Activated B cell treated with CpG ODN at 0.5 μM for 24 hours (primary cell): ENCODE measurements at regions of chr7 and their contacts with region 1.

Region 1: DNA sequence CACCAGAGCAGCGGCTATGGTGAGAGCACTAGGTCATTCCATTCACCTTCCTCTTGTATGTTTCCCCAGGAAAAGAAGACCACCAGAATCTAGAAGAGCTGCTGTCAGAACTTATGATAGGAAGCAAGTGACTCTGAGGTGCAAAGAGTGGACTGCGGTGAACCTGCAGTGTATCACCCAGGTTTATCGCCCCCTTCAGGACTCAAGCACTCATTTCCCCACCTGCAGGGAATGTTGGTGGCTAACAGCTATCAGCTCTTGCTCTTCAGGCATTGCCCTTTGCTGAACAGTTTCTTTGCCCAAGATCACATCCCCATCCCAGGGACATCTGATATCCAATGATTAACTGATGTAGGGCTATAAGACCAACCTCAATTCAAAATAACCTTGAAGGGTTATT is 66.3 kb upstream of the IL6 start:
- DNase-seq: no peak
- ATAC-seq: no peak
- H3K4me3 Mint-ChIP-seq: peak overlapping the region; percentile 80
- H3K27ac Mint-ChIP-seq: peak overlapping the region; percentile 95
- H3K4me1 Mint-ChIP-seq: peaks cover 88% of the 10 kb centered on the region
- H3K27me3 Mint-ChIP-seq: no peaks in the 10 kb centered on the region
- CTCF ChIP-seq: no peak

Region 2: DNA sequence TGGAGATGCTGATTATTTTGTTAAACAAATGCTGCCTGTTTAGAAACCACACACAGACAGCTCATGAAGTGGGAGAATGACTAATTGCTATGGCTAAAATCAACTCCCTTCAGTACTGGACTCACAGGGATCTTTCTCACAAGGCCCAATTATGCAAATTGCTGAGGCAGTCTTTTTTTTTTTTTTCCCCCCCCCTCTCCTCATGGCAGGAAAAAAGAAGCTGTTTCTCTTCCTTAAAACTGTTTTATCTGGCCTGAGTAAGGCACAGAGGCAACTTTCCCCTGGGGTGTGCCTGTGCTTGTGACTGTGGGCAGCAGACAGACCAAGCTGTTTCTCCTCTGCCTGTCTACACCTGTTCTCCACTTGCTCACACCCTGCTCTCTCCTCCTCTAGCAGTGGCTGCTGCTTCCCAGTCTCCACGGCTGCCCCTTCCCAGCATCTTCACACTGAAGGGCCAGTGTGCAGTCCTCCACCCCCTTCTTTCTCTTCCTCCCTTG is 95.4 kb before region 1 on chr7:
- CTCF ChIA-PET with region 1: interaction called, 75 read pairs
- POLR2A ChIA-PET with region 1: interaction called, 93 read pairs
- intact Hi-C with region 1: loop called (anchors 1 kb)
- DNase-seq: no peak
- ATAC-seq: peak; percentile 65
- H3K4me3 Mint-ChIP-seq: peak overlapping the region; percentile 39
- H3K27ac Mint-ChIP-seq: peak overlapping the region; percentile 88
- H3K4me1 Mint-ChIP-seq: peaks cover 86% of the 10 kb centered on the region
- H3K27me3 Mint-ChIP-seq: no peaks in the 10 kb centered on the region
- CTCF ChIP-seq: no peak

Region 3: DNA sequence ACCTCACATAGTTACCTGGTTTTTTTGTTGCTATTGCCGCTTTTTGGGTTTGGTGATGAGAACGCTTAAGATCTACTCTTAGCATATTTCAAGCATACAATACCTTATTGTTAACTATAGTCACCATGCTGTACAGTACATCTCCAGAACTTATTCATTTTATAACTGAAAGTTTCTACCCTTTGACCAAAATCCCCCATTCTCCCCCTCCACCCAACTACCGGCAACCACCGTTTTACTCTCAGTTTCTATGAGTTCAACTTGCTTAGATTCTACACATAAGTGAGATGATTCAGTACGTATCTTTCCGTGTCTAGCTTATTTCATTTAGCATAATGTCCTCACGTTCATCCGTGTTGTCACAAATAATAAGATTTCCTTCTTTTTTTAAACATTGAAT is 20.5 kb before region 1 on chr7:
- CTCF ChIA-PET with region 1: interaction called, 4 read pairs
- POLR2A ChIA-PET with region 1: interaction called, 15 read pairs
- intact Hi-C with region 1: loop called (anchors 1 kb)
- DNase-seq: no peak
- ATAC-seq: peak; percentile 91
- H3K4me3 Mint-ChIP-seq: peak overlapping the region; percentile 55
- H3K27ac Mint-ChIP-seq: peak overlapping the region; percentile 75
- H3K4me1 Mint-ChIP-seq: peaks cover 30% of the 10 kb centered on the region
- H3K27me3 Mint-ChIP-seq: no peaks in the 10 kb centered on the region
- CTCF ChIP-seq: no peak

Region 4: GRCh38 chr7:22712999-22713398 is 52.3 kb after region 1 on chr7:
- CTCF ChIA-PET with region 1: interaction called, 9 read pairs
- POLR2A ChIA-PET with region 1: interaction called, 65 read pairs
- intact Hi-C with region 1: loop called (anchors 1 kb)
- DNase-seq: no peak
- ATAC-seq: peak; percentile 85
- H3K4me3 Mint-ChIP-seq: peak overlapping the region; percentile 66
- H3K27ac Mint-ChIP-seq: peak overlapping the region; percentile 98
- H3K4me1 Mint-ChIP-seq: peaks cover 63% of the 10 kb centered on the region
- H3K27me3 Mint-ChIP-seq: no peaks in the 10 kb centered on the region
- CTCF ChIP-seq: no peak

Region 5: DNA sequence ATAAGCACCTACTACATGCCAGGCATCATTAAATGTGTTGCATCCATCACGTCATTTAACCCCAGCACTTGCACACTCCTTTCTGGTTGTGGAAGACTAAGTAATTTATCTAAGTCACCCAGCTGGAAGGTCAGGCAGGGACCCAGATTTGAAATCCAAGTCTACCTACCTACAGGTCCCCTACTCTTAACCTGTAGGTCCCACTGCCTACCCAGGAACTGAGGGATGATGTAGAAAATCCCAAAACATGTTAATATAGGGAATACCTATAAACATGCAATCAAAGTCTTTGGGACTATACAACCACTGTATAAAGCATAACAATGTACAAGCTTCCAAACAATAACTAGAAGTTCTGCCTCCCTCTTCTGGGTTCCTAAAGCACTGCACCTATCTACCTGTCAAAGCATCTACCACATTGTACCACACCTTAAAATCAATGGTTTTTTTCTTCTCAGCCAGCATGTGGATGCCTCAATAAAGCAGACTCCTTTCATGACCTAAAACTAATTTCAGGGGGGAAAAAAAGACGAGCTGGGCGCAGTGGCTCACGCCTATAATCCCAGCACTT is 71.9 kb after region 1 on chr7:
- CTCF ChIA-PET with region 1: interaction called, 110 read pairs
- POLR2A ChIA-PET with region 1: interaction called, 215 read pairs
- intact Hi-C with region 1: no loop called
- DNase-seq: no peak
- ATAC-seq: peak; percentile 61
- H3K4me3 Mint-ChIP-seq: no peak overlapping the region
- H3K27ac Mint-ChIP-seq: no peak overlapping the region
- H3K4me1 Mint-ChIP-seq: peaks cover 40% of the 10 kb centered on the region
- H3K27me3 Mint-ChIP-seq: no peaks in the 10 kb centered on the region
- CTCF ChIP-seq: no peak

Region 6: GRCh38 chr7:23013715-23014649 is 353.2 kb after region 1 on chr7 and contains the start of gene HYCC1:
- CTCF ChIA-PET with region 1: no interaction called
- POLR2A ChIA-PET with region 1: no interaction called
- intact Hi-C with region 1: loop called (anchors 5 kb)
- DNase-seq: peak; percentile 95
- ATAC-seq: peak; percentile 96
- H3K4me3 Mint-ChIP-seq: peak within 1 kb of the TSS; percentile 99
- H3K27ac Mint-ChIP-seq: peak within 1 kb of the TSS; percentile 93
- H3K4me1 Mint-ChIP-seq: peaks cover 44% of the 10 kb centered on the region
- H3K27me3 Mint-ChIP-seq: no peaks in the 10 kb centered on the region
- CTCF ChIP-seq: no peak
- total RNA-seq, gene HYCC1: 39.9 and 41.9 TPM in 2 replicates